ENCODE measurements at regions of chr3 and their contacts with region 1.

Region 1: DNA sequence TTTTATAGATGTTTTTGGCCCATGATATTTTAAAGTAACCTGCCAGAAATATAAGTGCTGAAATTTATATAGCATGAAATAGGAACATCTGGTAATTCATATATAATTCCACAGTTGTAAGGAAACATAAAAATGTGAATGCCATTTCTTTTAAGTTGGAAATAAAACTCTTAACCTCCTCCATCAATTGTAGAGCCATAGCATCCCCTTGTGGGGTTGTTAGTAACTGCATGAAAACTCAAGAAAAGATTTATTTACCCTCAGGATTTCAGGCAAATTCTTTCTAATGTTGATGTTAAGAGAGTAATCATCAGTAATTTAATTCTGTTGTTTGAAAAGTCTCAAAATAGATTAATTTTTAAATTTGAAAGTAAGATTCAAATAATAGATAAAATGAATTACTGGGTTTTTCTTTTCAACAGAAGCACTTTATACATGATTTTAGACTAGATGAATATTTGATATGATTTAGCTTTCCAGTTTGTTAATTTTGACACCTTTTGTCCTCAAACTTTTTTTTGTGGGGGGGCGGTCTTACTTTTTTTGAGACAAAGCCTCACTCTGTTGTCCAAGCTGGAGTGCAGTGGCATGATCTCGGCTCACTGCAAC is 74.7 kb downstream of the RASA2 start:
- DNase-seq: no peak

Region 2: GRCh38 chr3:141303481-141304223 is 257.9 kb before region 1 on chr3:
- intact Hi-C with region 1: loop called (anchors 1 kb)
- DNase-seq: peak in 2 of 10 donors; percentile 15 to 56

Region 3: GRCh38 chr3:141360888-141361598 is 200.5 kb before region 1 on chr3:
- intact Hi-C with region 1: loop called (anchors 5 kb)
- DNase-seq: no peak

Region 4: GRCh38 chr3:141460097-141460704 is 101.3 kb before region 1 on chr3:
- intact Hi-C with region 1: loop called (anchors 1 kb)
- DNase-seq: peak; percentile 72 to 98 (median 92)

Region 5: GRCh38 chr3:141754032-141754431 is 192.5 kb after region 1 on chr3:
- intact Hi-C with region 1: no loop called
- DNase-seq: no peak

Region 6: GRCh38 chr3:141782454-141782853 is 220.9 kb after region 1 on chr3:
- intact Hi-C with region 1: no loop called
- DNase-seq: no peak

Measured in posterior cingulate gyrus (tissue), 11 donors.